ENCODE measurements at regions of chr4 and their contacts with region 1.

Region 1: GRCh38 chr4:154977228-154977627 is 196.2 kb downstream of the RBM46 start:
- DNase-seq: no peak
- H3K4me3 ChIP-seq: no peak overlapping the region
- H3K27ac ChIP-seq: no peak overlapping the region
- H3K4me1 ChIP-seq: no peaks in the 10 kb centered on the region
- H3K27me3 ChIP-seq: no peaks in the 10 kb centered on the region
- CTCF ChIP-seq: no peak
- POLR2A ChIP-seq: no peak

Region 2: GRCh38 chr4:154757713-154758112 is 219.5 kb before region 1 on chr4:
- intact Hi-C with region 1: no loop called
- DNase-seq: no peak
- H3K4me3 ChIP-seq: no peak overlapping the region
- H3K27ac ChIP-seq: no peak overlapping the region
- H3K4me1 ChIP-seq: no peaks in the 10 kb centered on the region
- H3K27me3 ChIP-seq: no peaks in the 10 kb centered on the region
- CTCF ChIP-seq: no peak
- POLR2A ChIP-seq: no peak

Region 3: DNA sequence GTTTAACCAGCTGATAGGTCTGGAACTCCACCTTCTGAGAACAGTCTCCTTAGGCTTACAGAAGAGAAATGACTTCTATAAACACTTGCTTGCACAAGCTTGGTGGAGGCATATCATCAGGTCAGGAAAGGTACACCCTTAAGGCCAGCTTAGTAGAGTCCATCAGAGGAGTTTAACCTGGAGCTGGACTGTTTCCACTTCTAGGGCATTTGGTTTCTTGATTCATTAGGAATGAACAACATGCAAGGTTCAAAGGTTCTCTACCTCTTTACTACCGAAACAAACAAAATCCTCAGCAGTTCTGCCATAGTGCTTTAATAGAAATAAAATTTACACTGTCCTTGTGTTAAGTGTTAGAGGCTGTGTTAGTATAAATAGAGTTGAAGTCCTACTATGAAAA is 59.8 kb after region 1 on chr4:
- intact Hi-C with region 1: loop called (anchors 2 kb)
- DNase-seq: no peak
- H3K4me3 ChIP-seq: no peak overlapping the region
- H3K27ac ChIP-seq: no peak overlapping the region
- H3K4me1 ChIP-seq: no peaks in the 10 kb centered on the region
- H3K27me3 ChIP-seq: no peaks in the 10 kb centered on the region
- CTCF ChIP-seq: no peak
- POLR2A ChIP-seq: no peak

Region 4: DNA sequence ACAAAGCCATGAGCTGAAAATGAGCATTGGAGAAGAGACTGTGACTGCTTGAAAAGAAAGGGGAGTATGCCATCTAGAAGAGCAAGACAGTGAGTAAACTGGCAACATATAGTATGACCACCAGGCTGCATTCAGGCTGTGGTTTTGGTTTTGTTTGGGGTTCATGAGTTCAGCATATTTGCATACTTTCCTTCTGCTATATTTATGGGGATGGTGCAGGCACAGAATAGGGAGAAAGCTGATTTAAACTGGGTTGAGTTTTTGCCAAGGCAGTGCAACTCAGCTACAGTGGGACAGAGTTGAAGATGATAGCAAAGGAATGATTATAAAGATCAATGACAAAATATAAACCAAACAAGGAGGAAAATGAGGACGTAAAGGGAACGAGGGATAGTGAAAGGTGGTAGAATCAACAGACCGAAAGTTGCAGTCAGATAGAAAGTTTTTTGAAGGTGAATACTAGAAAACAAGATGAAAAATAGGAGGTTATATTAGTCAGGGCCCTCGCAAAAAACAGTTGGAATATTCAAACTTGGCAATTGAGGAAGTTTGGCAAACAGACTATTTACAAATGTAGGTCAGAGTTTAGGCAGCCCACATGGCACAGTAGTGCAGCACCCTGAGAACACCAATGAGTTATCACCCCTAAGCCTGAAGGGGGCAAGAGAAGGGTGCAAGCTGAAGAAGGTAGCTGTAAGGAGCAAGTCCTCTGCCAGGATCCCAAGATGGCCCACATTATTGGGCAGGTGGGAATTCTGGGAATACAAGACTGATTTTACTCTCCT is 514.3 kb after region 1 on chr4:
- intact Hi-C with region 1: no loop called
- DNase-seq: no peak
- H3K4me3 ChIP-seq: no peak overlapping the region
- H3K27ac ChIP-seq: no peak overlapping the region
- H3K4me1 ChIP-seq: no peaks in the 10 kb centered on the region
- H3K27me3 ChIP-seq: no peaks in the 10 kb centered on the region
- CTCF ChIP-seq: no peak
- POLR2A ChIP-seq: no peak

Measured in breast epithelium (tissue), 4 donors.